ENCODE measurements at regions of chr13 and their contacts with region 1.

Region 1: GRCh38 chr13:44917589-44918325 is 71.5 kb downstream of the NUFIP1 start:
- DNase-seq: peak; percentile 99
- H3K4me3 Mint-ChIP-seq: no peak overlapping the region
- H3K27ac Mint-ChIP-seq: no peak overlapping the region
- H3K4me1 Mint-ChIP-seq: no peaks in the 10 kb centered on the region
- H3K27me3 Mint-ChIP-seq: no peaks in the 10 kb centered on the region

Region 2: GRCh38 chr13:44648392-44649103 is 269.2 kb before region 1 on chr13:
- intact Hi-C with region 1: loop called (anchors 2 kb)
- DNase-seq: no peak
- H3K4me3 Mint-ChIP-seq: no peak overlapping the region
- H3K27ac Mint-ChIP-seq: peak overlapping the region; percentile 29
- H3K4me1 Mint-ChIP-seq: peaks cover 14% of the 10 kb centered on the region
- H3K27me3 Mint-ChIP-seq: peaks cover 6% of the 10 kb centered on the region

Region 3: GRCh38 chr13:44778766-44779484 is 138.8 kb before region 1 on chr13:
- intact Hi-C with region 1: no loop called
- DNase-seq: no peak
- H3K4me3 Mint-ChIP-seq: no peak overlapping the region
- H3K27ac Mint-ChIP-seq: no peak overlapping the region
- H3K4me1 Mint-ChIP-seq: no peaks in the 10 kb centered on the region
- H3K27me3 Mint-ChIP-seq: peaks cover 20% of the 10 kb centered on the region

Region 4: DNA sequence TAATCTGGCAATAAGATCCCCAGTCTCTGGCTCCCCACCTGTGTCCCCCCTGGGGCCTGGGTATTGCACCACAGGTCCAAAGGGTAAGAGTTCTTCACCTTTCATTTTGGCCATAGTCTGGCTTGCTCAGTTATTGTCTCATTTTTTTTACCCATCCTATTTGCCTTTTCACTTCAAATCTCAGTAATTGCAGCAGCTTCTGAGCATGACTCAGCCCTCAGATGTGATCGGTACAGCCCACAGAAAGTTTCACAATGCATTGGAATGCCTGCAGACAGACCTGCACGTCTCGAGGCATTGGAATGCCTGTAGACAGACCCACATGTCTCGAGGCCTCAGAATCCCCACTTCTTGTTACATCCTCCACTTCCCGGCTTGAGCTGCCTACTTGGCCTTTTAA is 102.1 kb before region 1 on chr13:
- intact Hi-C with region 1: loop called (anchors 2 kb)
- DNase-seq: peak; percentile 71
- H3K4me3 Mint-ChIP-seq: no peak overlapping the region
- H3K27ac Mint-ChIP-seq: no peak overlapping the region
- H3K4me1 Mint-ChIP-seq: peaks cover 16% of the 10 kb centered on the region
- H3K27me3 Mint-ChIP-seq: peaks cover 29% of the 10 kb centered on the region

Region 5: DNA sequence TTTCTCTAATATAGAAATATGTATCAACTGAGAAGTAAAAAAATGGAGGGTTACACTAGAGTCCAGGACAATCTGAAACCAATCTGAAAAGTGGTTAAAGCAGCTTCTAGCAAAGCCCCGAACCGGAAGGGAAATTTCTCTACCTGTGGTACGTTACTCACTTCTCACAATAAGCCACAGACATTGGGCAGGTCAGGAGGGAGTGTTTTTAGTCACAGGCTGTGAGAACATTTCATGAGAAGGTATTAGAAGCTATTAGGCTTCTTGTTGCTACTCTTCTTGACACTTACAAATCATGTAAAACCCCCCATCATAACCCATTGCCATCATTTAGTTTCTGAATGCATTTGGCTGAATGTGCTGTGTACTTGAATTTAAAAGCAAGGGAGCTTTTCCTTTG is 49.4 kb before region 1 on chr13:
- intact Hi-C with region 1: no loop called
- DNase-seq: no peak
- H3K4me3 Mint-ChIP-seq: no peak overlapping the region
- H3K27ac Mint-ChIP-seq: no peak overlapping the region
- H3K4me1 Mint-ChIP-seq: peaks cover 3% of the 10 kb centered on the region
- H3K27me3 Mint-ChIP-seq: peaks cover 18% of the 10 kb centered on the region

Region 6: DNA sequence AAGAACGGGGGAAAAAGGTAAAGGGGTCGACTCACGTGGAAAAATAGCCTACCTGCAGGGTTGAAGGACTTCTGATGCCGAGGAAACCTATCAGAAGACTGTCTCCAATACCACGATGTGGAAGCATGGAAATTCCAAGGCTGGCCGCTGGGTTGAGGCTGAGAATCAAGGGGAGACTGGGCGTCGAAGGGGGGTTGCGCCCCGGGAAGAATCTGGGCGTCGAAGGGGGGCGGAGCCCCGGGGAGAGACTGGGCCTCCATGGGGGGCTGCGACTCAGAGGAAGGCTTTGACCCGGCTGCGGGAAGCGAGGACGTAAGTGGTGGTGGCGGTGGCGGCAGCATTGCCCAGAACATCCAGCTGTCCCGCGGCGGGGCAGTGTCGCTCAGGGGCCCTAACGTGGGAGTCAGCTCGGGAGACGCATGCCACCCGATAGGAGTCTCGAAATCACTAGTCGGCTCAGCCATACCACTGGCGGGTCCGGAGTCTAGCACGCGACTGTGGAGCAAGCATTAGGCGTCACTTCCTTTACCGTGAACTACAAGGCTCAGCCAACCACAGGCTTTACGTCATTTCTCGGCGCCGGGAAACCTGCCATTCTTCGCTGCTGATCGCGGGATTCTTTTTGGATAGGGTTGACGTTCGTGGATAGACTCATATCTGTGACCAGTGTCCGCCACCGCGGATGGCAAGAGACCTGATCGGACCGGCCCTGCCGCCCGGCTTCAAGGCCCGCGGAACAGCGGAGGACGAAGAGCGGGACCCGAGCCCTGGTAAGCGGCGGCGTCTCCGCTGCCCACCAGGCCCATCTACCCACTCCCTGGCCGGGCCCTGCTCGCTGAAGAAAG is 71.4 kb after region 1 on chr13 and contains the starts of genes GPALPP1 and NUFIP1:
- intact Hi-C with region 1: loop called (anchors 1 kb)
- DNase-seq: peak; percentile 98
- H3K4me3 Mint-ChIP-seq: peak within 1 kb of the TSS; percentile 99
- H3K27ac Mint-ChIP-seq: peak within 1 kb of the TSS; percentile 98
- H3K4me1 Mint-ChIP-seq: peaks cover 46% of the 10 kb centered on the region
- H3K27me3 Mint-ChIP-seq: no peaks in the 10 kb centered on the region
- total RNA-seq, gene GPALPP1: 29.1 and 32.3 TPM in 2 replicates
- total RNA-seq, gene NUFIP1: 13.3 and 13.8 TPM in 2 replicates

Region 7: GRCh38 chr13:46160471-46161066 is 1242.8 kb after region 1 on chr13:
- intact Hi-C with region 1: loop called (anchors 10 kb)
- DNase-seq: peak; percentile 85
- H3K4me3 Mint-ChIP-seq: peak overlapping the region; percentile 76
- H3K27ac Mint-ChIP-seq: peak overlapping the region; percentile 83
- H3K4me1 Mint-ChIP-seq: peaks cover 48% of the 10 kb centered on the region
- H3K27me3 Mint-ChIP-seq: no peaks in the 10 kb centered on the region